Sciatic nerve (tissue), 2 donors: ENCODE measurements at regions of chr6 and their contacts with region 1.

Region 1: GRCh38 chr6:11653028-11653583 is 115.6 kb downstream of the TMEM170B start:
- DNase-seq: no peak
- ATAC-seq: no peak

Region 2: GRCh38 chr6:11682526-11682925 is 29.4 kb after region 1 on chr6:
- intact Hi-C with region 1: loop called (anchors 2 kb)
- DNase-seq: no peak
- ATAC-seq: no peak

Region 3: GRCh38 chr6:12103158-12103557 is 450.1 kb after region 1 on chr6:
- intact Hi-C with region 1: no loop called
- DNase-seq: no peak
- ATAC-seq: no peak

Region 4: DNA sequence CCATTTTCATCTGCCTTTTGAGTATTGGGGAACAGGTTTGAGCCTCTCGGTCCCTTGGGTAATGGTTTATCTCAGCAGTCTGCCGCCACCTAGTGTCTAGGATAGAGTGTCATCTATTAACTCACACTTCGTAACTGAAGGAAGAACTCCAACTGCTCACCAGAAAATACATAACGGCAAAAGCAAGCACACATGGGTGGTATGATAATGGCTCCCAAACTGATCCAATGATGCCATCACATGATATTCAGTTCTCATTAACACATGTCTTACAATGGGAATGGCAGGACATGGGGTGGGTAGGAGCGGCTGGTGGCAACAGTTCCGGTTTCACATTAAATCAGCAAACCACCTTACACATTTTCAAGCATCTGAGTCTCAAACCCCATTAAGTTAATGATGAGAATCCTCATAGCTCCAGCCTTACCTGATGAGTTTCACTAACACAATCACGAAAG is 952.8 kb after region 1 on chr6:
- intact Hi-C with region 1: loop called (anchors 10 kb)
- DNase-seq: no peak
- ATAC-seq: peak; percentile 66